ENCODE measurements at regions of chr7 and their contacts with region 1.

Region 1: DNA sequence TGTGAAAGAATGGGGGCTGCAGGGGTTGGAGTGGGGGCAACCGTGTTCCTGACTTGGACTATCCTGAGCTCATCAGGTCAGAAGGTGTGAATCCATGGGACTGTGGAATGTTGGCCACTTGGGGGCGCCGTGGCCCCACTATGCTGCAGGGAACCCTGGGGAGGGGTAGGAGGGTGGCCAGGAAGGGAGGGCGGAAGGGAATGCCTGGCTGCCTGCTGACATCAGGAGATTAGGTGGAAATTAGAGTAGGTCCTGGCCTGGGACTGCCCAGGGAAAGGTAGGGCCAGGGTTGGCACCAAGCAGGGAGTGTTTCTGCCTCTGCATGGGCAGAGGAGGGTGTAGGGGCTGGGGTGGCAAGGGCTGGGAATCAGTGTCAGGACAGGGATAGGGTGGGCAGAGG is 65.8 kb upstream of the PRSS58 start:
- DNase-seq: peak; percentile 88
- ATAC-seq: peak; percentile 71
- H3K4me3 Mint-ChIP-seq: no peak overlapping the region
- H3K27ac Mint-ChIP-seq: peak overlapping the region; percentile 16; the same call in 1 of the 2 replicates
- H3K4me1 Mint-ChIP-seq: peaks cover 32% of the 10 kb centered on the region
- H3K27me3 Mint-ChIP-seq: no peaks in the 10 kb centered on the region; the same call in 1 of the 2 replicates
- CTCF ChIP-seq: peak; percentile 70

Region 2: GRCh38 chr7:142248166-142249160 is 75.2 kb before region 1 on chr7:
- CTCF ChIA-PET with region 1: interaction called, 11 read pairs
- POLR2A ChIA-PET with region 1: no interaction called
- DNase-seq: peak; percentile 25
- ATAC-seq: peak; percentile 86
- H3K4me3 Mint-ChIP-seq: no peak overlapping the region
- H3K27ac Mint-ChIP-seq: no peak overlapping the region
- H3K4me1 Mint-ChIP-seq: peaks cover 16% of the 10 kb centered on the region
- H3K27me3 Mint-ChIP-seq: no peaks in the 10 kb centered on the region; the same call in 1 of the 2 replicates
- CTCF ChIP-seq: no peak

Region 3: GRCh38 chr7:142313528-142313927 is 10.2 kb before region 1 on chr7:
- CTCF ChIA-PET with region 1: interaction called, 85 read pairs
- POLR2A ChIA-PET with region 1: no interaction called
- DNase-seq: no peak
- ATAC-seq: no peak
- H3K4me3 Mint-ChIP-seq: no peak overlapping the region
- H3K27ac Mint-ChIP-seq: no peak overlapping the region
- H3K4me1 Mint-ChIP-seq: no peaks in the 10 kb centered on the region
- H3K27me3 Mint-ChIP-seq: peaks cover 6% of the 10 kb centered on the region
- CTCF ChIP-seq: no peak

Region 4: GRCh38 chr7:142365410-142365842 is 41.7 kb after region 1 on chr7:
- CTCF ChIA-PET with region 1: interaction called, 16 read pairs
- POLR2A ChIA-PET with region 1: no interaction called
- DNase-seq: peak; percentile 64
- ATAC-seq: peak; percentile 97
- H3K4me3 Mint-ChIP-seq: peak overlapping the region; percentile 28; the same call in 1 of the 2 replicates
- H3K27ac Mint-ChIP-seq: peak overlapping the region; percentile 99
- H3K4me1 Mint-ChIP-seq: peaks cover 37% of the 10 kb centered on the region
- H3K27me3 Mint-ChIP-seq: peaks cover 45% of the 10 kb centered on the region
- CTCF ChIP-seq: no peak

Region 5: DNA sequence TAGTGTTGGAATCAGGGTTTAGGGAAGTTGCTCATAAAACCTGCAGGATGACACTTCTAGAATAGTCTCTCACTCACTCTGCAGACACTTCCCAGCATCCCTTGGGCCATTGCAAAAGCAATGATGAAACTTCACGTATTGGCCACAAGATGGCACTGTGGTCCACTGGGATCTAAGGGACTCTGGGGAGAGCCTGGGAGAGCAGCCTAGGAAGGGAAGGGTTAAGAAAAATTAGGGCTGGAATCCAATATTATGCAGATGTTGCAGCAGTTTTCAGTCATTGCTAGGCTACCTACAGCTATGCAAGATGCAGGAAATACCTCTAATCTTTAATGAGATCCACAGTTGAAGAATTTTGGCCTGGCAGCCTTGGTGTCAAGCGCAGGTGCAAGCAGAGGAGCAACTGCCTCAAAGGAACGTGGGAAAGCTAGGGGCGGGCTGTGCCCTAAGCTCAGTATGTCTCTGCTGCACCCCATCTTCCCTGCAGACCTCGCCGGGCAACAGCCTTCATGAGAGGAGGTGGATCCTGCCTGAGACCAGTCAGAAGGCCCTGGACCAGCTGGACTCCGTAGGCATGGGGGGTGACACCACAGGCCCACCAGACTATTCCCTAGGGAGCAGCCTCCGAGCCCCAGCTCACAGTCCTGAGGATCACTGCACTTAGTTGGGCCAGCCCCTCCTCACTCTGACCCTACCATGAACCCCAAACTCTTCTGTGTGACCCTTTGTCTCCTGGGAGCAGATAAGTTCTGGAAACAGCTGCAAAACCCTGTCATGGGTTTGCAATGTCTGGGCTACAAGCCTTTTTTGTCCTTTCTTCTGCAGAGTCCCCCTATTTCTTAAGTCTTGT is 62.0 kb after region 1 on chr7:
- CTCF ChIA-PET with region 1: interaction called, 26 read pairs
- POLR2A ChIA-PET with region 1: no interaction called
- DNase-seq: peak; percentile 57
- ATAC-seq: peak; percentile 90
- H3K4me3 Mint-ChIP-seq: no peak overlapping the region
- H3K27ac Mint-ChIP-seq: no peak overlapping the region
- H3K4me1 Mint-ChIP-seq: peaks cover 14% of the 10 kb centered on the region
- H3K27me3 Mint-ChIP-seq: peaks cover 7% of the 10 kb centered on the region
- CTCF ChIP-seq: peak; percentile 66

Region 6: GRCh38 chr7:142478479-142479072 is 154.9 kb after region 1 on chr7:
- CTCF ChIA-PET with region 1: interaction called, 16 read pairs
- POLR2A ChIA-PET with region 1: no interaction called
- DNase-seq: peak; percentile 38
- ATAC-seq: peak; percentile 79
- H3K4me3 Mint-ChIP-seq: no peak overlapping the region
- H3K27ac Mint-ChIP-seq: no peak overlapping the region
- H3K4me1 Mint-ChIP-seq: peaks cover 11% of the 10 kb centered on the region
- H3K27me3 Mint-ChIP-seq: peaks cover 12% of the 10 kb centered on the region
- CTCF ChIP-seq: peak; percentile 62